ENCODE measurements at regions of chr11 and their contacts with region 1.

Region 1: GRCh38 chr11:2377511-2378443 is 667 bp downstream of the CD81 start:
- DNase-seq: peak; percentile 88
- H3K4me3 ChIP-seq: peak overlapping the region; percentile 86 to 100 (median 99)
- H3K27ac ChIP-seq: peak overlapping the region; percentile 99 to 100 (median 100)
- H3K4me1 ChIP-seq: peaks cover 0 to 65% (median 53%) of the 10 kb centered on the region in 4 donors
- H3K27me3 ChIP-seq: no peaks in the 10 kb centered on the region
- CTCF ChIP-seq: no peak
- EP300 ChIP-seq: no peak
- POLR2A ChIP-seq: no peak

Region 2: DNA sequence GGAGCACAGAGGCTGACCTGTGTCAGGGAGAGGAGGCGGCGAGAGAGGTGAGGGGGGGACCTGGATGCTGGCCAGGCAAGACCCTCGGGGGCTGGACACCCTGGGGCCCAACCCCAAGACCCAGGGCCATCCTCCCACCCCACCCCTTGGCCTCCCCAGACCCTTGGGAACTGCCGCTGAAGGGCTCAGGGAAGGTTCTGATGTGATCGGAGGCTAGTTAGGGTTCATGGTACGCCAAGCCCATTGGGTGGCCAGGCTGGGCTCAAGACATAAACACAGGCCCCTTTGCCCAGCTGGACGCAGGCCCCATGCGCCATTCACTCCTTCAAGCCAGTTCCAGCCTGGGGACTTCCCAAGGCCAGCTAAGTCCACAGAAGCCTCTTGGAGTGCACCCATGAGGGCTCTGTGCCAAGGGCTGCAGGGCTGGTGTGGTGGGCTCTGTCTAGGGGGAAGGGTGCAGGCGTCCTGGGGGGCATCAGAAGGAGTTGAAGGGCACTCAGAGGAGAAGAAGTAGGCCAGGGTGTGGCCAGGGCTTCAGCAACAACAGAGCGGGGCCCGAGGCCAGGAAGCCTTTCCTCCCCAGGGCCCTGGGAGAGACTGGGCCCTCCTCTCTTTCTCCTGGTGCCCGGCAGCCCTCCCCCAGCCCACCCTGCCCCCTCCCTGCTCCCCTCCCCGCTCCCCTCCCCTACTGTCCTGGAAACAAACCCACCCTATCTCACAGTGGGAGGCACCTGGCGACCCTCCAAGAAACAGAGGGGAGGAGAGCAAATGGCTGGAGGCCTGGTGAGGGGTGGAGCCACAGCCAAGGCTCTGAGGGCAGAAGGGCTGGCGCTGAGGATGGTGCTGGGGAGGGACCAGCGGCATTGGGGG is 63.0 kb before region 1 on chr11:
- intact Hi-C with region 1: loop called (anchors 2 kb)
- DNase-seq: peak; percentile 98
- H3K4me3 ChIP-seq: peak overlapping the region in 3 of 4 donors; percentile 18 to 34 (median 27)
- H3K27ac ChIP-seq: peak overlapping the region; percentile 83 to 90 (median 88)
- H3K4me1 ChIP-seq: peaks cover 0 to 54% (median 47%) of the 10 kb centered on the region in 4 donors
- H3K27me3 ChIP-seq: no peaks in the 10 kb centered on the region
- CTCF ChIP-seq: no peak
- EP300 ChIP-seq: no peak
- POLR2A ChIP-seq: no peak

Region 3: GRCh38 chr11:2355000-2355644 is 22.7 kb before region 1 on chr11:
- intact Hi-C with region 1: no loop called
- DNase-seq: no peak
- H3K4me3 ChIP-seq: no peak overlapping the region
- H3K27ac ChIP-seq: no peak overlapping the region
- H3K4me1 ChIP-seq: no peaks in the 10 kb centered on the region
- H3K27me3 ChIP-seq: no peaks in the 10 kb centered on the region
- CTCF ChIP-seq: no peak
- EP300 ChIP-seq: no peak
- POLR2A ChIP-seq: no peak

Measured in sigmoid colon (tissue), 7 donors.